Heart right ventricle (tissue), 16 donors: ENCODE measurements at regions of chr22 and their contacts with region 1.

Region 1: GRCh38 chr22:30089655-30089974 is 9.4 kb downstream of the HORMAD2 start:
- DNase-seq: no peak
- ATAC-seq: no peak
- H3K4me3 ChIP-seq: no peak overlapping the region
- H3K27ac ChIP-seq: no peak overlapping the region
- H3K4me1 ChIP-seq: peaks cover 0 to 7% (median 0%) of the 10 kb centered on the region in 9 donors
- H3K27me3 ChIP-seq: peaks cover 0 to 24% (median 11%) of the 10 kb centered on the region in 7 donors
- CTCF ChIP-seq: no peak

Region 2: GRCh38 chr22:29625090-29625825 is 464.4 kb before region 1 on chr22:
- intact Hi-C with region 1: loop called in 4 of 10 experiments (anchors 5 to 10 kb)
- DNase-seq: no peak
- ATAC-seq: peak in 4 of 8 donors; percentile 61 to 71 (median 64)
- H3K4me3 ChIP-seq: no peak overlapping the region
- H3K27ac ChIP-seq: no peak overlapping the region
- H3K4me1 ChIP-seq: peaks cover 0 to 60% (median 36%) of the 10 kb centered on the region in 9 donors
- H3K27me3 ChIP-seq: no peaks in the 10 kb centered on the region
- CTCF ChIP-seq: peak; percentile 65 to 91 (median 83)

Region 3: DNA sequence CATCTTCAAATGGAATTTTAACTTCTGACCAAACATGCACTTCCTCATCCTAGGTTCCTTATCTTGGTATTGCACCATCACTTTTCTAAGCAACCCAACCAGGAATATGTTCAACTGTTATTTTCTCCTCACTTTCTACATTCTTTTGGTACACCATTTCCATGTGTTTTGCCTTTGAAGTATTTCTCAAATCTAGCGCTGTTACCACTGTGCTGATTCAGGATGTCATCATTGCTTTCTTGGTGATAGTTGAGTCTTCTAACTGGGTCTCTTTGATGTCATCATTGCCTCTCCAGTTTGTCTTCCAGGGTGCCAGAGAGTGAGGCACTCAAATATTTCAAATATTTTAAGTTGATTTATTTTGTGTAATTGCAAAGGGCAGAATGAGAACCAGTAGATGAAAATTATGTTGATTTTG is 38.1 kb after region 1 on chr22:
- intact Hi-C with region 1: no loop called
- DNase-seq: no peak
- ATAC-seq: no peak
- H3K4me3 ChIP-seq: no peak overlapping the region
- H3K27ac ChIP-seq: no peak overlapping the region
- H3K4me1 ChIP-seq: no peaks in the 10 kb centered on the region
- H3K27me3 ChIP-seq: peaks cover 0 to 69% (median 34%) of the 10 kb centered on the region in 7 donors
- CTCF ChIP-seq: no peak